ENCODE measurements at regions of chr4 and their contacts with region 1.

Region 1: GRCh38 chr4:173013232-173013930 is 155.2 kb upstream of the GALNT7 start:
- DNase-seq: peak; percentile 57
- ATAC-seq: peak; percentile 62
- H3K4me3 ChIP-seq: no peak overlapping the region
- H3K27ac ChIP-seq: no peak overlapping the region
- H3K4me1 ChIP-seq: peaks cover 11% of the 10 kb centered on the region
- H3K27me3 ChIP-seq: no peaks in the 10 kb centered on the region
- CTCF ChIP-seq: peak; percentile 66

Region 2: GRCh38 chr4:172188249-172188938 is 825.0 kb before region 1 on chr4:
- CTCF ChIA-PET with region 1: no interaction called
- POLR2A ChIA-PET with region 1: no interaction called
- intact Hi-C with region 1: no loop called
- DNase-seq: peak; percentile 12
- ATAC-seq: peak; percentile 54
- H3K4me3 ChIP-seq: 0 out of 2 replicates have a peak overlapping the region, but pooled peaks have one; percentile 38
- H3K27ac ChIP-seq: 0 out of 2 replicates have a peak overlapping the region, but pooled peaks have one; percentile 23
- H3K4me1 ChIP-seq: 0 out of 2 replicates have a peak, but pooled peaks cover 11% of the 10 kb centered on the region
- H3K27me3 ChIP-seq: no peaks in the 10 kb centered on the region
- CTCF ChIP-seq: no peak

Region 3: DNA sequence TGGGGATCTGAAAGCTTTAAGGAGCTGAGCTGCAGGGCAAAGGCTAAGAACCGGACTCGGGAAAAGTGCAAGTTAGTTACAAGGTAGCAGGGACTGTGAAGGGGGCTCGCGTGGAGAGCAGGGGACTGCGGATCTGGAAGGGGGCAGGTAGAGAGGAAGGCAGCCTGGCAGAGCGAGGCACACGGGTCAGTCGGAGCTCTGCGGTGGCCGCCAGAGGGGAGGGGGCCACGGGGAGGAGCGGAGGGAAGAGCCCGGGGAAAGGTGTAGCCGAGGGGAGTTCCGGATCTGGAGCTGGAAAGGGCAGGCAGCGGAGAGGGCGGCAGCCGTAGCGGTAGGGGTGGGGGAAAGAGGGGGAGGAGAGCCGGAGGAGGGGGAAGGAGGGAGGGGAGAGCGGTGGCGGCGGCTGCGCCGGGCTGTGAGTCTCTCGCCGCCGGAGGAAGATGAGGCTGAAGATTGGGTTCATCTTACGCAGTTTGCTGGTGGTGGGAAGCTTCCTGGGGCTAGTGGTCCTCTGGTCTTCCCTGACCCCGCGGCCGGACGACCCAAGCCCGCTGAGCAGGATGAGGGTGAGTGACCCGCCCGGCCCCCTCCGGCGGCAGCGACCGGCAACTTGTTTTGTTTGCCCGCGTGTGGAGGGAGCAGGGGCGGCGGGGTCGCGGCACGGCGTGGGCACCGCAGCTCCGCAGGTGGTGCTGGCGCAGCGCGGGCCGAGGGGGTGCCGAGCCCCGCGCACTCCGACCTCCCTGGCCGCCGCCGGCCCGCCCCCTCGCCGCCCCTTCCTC is 155.2 kb after region 1 on chr4 and contains the start of gene GALNT7:
- CTCF ChIA-PET with region 1: interaction called, 11 read pairs
- POLR2A ChIA-PET with region 1: no interaction called
- intact Hi-C with region 1: loop called (anchors 1 kb)
- DNase-seq: peak; percentile 71
- ATAC-seq: peak; percentile 63
- H3K4me3 ChIP-seq: peak within 1 kb of the TSS; percentile 93
- H3K27ac ChIP-seq: peak within 1 kb of the TSS; percentile 83
- H3K4me1 ChIP-seq: peaks cover 21% of the 10 kb centered on the region
- H3K27me3 ChIP-seq: no peaks in the 10 kb centered on the region
- CTCF ChIP-seq: no peak
- total RNA-seq, gene GALNT7: 13.8 and 16.3 TPM in 2 replicates

Region 4: DNA sequence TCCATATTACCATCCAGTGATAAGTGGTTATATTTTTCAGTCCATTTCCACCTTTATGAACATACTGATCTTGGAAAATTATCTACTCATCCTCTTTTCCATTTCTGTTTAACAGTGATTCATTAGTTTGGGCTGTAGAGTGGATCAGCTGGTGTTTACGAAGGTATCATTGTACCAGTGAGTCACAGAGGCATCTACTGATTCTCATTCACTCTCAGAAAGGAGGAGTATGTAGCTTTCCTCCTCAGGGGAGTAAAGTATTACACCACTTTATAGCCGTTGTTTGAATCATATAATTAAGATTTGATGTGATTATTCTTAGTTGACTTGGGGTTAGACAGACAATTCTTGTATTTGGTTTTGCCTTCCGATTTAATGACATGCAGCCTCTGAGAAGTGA is 229.9 kb after region 1 on chr4:
- CTCF ChIA-PET with region 1: interaction called, 11 read pairs
- POLR2A ChIA-PET with region 1: no interaction called
- intact Hi-C with region 1: no loop called
- DNase-seq: peak; percentile 80
- ATAC-seq: peak; percentile 99
- H3K4me3 ChIP-seq: no peak overlapping the region
- H3K27ac ChIP-seq: peak overlapping the region; percentile 22
- H3K4me1 ChIP-seq: peaks cover 18% of the 10 kb centered on the region
- H3K27me3 ChIP-seq: no peaks in the 10 kb centered on the region
- CTCF ChIP-seq: no peak

Region 5: DNA sequence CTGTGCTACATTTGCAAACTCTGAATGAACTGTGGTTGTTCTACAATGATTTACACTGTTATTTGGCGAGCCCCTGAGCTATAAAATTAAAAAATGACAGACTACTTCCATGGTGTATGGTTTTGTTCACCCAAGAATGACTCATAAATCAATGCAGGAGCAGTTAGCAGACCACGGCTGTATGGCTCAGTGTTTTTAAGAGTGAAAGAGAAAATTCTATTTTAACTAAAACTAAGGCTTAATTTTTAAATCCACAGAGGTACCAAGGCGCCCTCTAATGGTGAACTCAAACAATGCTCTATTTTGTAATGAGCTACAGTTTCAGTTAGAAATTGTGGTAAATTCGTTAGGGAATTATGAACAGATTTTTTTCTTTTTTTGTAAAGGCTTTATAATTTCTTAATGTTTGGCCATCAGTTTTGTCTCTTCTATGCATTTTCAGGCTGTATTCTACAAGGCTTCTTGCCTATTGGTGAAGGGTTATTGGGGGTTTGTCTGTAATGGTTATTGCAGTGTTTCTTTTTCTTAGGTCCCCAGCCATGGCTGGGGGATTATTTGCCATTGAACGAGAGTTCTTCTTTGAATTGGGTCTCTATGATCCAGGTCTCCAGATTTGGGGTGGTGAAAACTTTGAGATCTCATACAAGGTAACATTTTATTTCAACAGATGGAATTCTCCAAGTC is 288.3 kb after region 1 on chr4:
- CTCF ChIA-PET with region 1: interaction called, 10 read pairs
- POLR2A ChIA-PET with region 1: no interaction called
- intact Hi-C with region 1: no loop called
- DNase-seq: peak; percentile 52
- ATAC-seq: peak; percentile 68
- H3K4me3 ChIP-seq: no peak overlapping the region
- H3K27ac ChIP-seq: no peak overlapping the region
- H3K4me1 ChIP-seq: peaks cover 4% of the 10 kb centered on the region; the same call in 1 of the 2 replicates
- H3K27me3 ChIP-seq: no peaks in the 10 kb centered on the region
- CTCF ChIP-seq: peak; percentile 78